Heart right ventricle (tissue), 16 donors: ENCODE measurements at regions of chr4 and their contacts with region 1.

Region 1: GRCh38 chr4:96342196-96342595 is 502.3 kb downstream of the PDHA2 start:
- DNase-seq: no peak
- ATAC-seq: no peak
- H3K4me3 ChIP-seq: no peak overlapping the region
- H3K27ac ChIP-seq: no peak overlapping the region
- H3K4me1 ChIP-seq: no peaks in the 10 kb centered on the region
- H3K27me3 ChIP-seq: no peaks in the 10 kb centered on the region
- CTCF ChIP-seq: no peak

Region 2: DNA sequence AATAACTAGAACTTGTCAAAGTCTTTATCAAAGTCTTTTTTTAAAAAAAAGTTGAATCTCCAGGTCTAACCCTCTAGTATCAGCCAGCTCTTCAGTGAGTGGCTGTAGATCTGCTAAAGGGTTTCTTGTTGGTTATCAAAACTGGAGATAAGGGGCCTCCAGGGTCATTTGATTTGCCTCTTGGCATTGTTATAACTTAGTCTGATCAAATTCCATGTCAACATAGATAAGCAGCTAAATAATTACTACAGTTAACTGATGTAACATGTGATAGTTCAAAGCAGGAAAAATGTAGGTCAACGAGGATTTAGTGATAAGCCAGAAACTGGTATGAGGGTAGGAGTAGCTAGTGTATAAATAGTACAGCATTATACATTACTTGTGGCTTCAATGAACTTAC is 37.2 kb before region 1 on chr4:
- intact Hi-C with region 1: no loop called
- DNase-seq: no peak
- ATAC-seq: no peak
- H3K4me3 ChIP-seq: no peak overlapping the region
- H3K27ac ChIP-seq: no peak overlapping the region
- H3K4me1 ChIP-seq: no peaks in the 10 kb centered on the region
- H3K27me3 ChIP-seq: no peaks in the 10 kb centered on the region
- CTCF ChIP-seq: no peak

Region 3: DNA sequence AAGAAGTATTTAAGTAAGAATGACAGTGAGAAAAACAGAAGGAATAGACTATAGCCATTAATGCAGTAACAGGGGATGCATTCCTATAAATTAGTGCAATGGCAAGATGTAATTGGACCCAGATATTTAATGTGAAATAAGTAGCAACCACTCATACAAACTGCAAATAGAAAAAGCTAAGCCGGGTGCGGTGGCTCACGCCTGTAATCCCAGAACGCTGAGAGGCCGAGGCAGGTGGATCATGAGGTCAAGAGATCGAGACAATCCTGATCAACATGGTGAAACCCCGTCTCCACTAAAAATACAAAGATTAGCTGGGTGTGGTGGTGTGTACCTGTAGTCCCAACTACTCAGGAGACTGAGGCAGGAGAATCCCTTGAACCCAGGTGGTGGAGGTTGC is 343.5 kb after region 1 on chr4:
- intact Hi-C with region 1: loop called in 1 of 10 experiments (anchors 5 kb)
- DNase-seq: no peak
- ATAC-seq: no peak
- H3K4me3 ChIP-seq: no peak overlapping the region
- H3K27ac ChIP-seq: no peak overlapping the region
- H3K4me1 ChIP-seq: no peaks in the 10 kb centered on the region
- H3K27me3 ChIP-seq: no peaks in the 10 kb centered on the region
- CTCF ChIP-seq: no peak